Right cardiac atrium (tissue), 5 donors: ENCODE measurements at regions of chr14 and their contacts with region 1.

Region 1: GRCh38 chr14:92951912-92952471 is 29.0 kb downstream of the CHGA start:
- DNase-seq: peak; percentile 76 to 93 (median 92)
- ATAC-seq: peak; percentile 71 to 82
- H3K4me3 ChIP-seq: no peak overlapping the region
- H3K27ac ChIP-seq: peak overlapping the region; percentile 82
- H3K4me1 ChIP-seq: peaks cover 2% of the 10 kb centered on the region
- H3K27me3 ChIP-seq: no peaks in the 10 kb centered on the region

Region 2: GRCh38 chr14:92748259-92749016 is 203.6 kb before region 1 on chr14 and contains the start of gene LGMN:
- intact Hi-C with region 1: no loop called
- DNase-seq: peak; percentile 98 to 99 (median 98)
- ATAC-seq: peak; percentile 99 to 100
- H3K4me3 ChIP-seq: peak within 1 kb of the TSS; percentile 62
- H3K27ac ChIP-seq: peak within 1 kb of the TSS; percentile 88
- H3K4me1 ChIP-seq: no peaks in the 10 kb centered on the region
- H3K27me3 ChIP-seq: no peaks in the 10 kb centered on the region
- total RNA-seq, gene LGMN: 71.9 to 92.5 (median 89.2) TPM

Region 3: GRCh38 chr14:93137864-93138263 is 185.9 kb after region 1 on chr14:
- intact Hi-C with region 1: loop called (anchors 2 to 5 kb)
- DNase-seq: peak; percentile 60 to 81 (median 81)
- ATAC-seq: peak; percentile 71 to 77
- H3K4me3 ChIP-seq: no peak overlapping the region
- H3K27ac ChIP-seq: no peak overlapping the region
- H3K4me1 ChIP-seq: no peaks in the 10 kb centered on the region
- H3K27me3 ChIP-seq: no peaks in the 10 kb centered on the region

Region 4: GRCh38 chr14:93142854-93143652 is 191.1 kb after region 1 on chr14:
- intact Hi-C with region 1: loop called (anchors 2 to 5 kb)
- DNase-seq: no peak
- ATAC-seq: no peak
- H3K4me3 ChIP-seq: no peak overlapping the region
- H3K27ac ChIP-seq: no peak overlapping the region
- H3K4me1 ChIP-seq: no peaks in the 10 kb centered on the region
- H3K27me3 ChIP-seq: no peaks in the 10 kb centered on the region